Activated CD4-positive, alpha-beta T cell treated with anti-CD3 and anti-CD28 coated beads for 36 hours (primary cell): ENCODE measurements at regions of chr6 and their contacts with region 1.

Region 1: DNA sequence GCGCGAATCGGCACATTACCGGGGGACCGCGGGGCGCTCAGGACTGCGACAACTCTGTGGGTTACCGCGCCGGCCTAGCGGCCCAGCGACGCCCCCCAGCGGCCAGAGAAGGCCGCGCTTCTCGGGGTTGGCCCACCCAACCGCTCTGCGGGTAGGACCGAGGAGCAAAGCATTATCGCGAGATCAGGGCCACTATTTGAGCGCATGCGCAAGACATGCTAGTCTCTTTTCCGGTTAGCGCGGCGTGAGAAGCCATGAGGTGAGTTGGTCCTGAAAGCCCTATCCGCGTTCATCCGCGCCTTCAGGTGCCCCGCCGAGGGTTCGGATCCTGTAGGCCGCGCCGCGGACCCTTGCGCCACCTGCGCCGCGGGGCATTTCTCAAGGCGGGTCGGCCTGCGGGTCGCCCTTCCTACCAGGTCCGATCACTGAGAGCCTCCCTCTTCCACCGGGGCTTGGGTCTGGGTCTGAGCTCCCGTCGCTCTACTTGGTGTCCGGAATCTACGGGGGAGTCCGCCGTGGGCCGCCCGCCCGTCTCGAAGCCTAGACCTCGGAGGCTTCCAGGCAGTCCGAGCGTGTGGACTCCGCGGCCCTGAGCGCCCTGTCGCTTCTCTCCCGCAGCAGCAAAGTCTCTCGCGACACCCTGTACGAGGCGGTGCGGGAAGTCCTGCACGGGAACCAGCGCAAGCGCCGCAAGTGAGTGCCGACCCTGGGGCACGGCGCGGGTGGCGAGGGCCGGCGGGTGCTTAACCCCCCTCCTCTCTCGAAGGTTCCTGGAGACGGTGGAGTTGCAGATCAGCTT is at the start of gene RPL10A:
- DNase-seq: peak; percentile 97
- ATAC-seq: peak; percentile 87
- H3K4me3 Mint-ChIP-seq: peak within 1 kb of the TSS; percentile 93
- H3K27ac Mint-ChIP-seq: peak within 1 kb of the TSS; percentile 98
- H3K4me1 Mint-ChIP-seq: peaks cover 43% of the 10 kb centered on the region
- H3K27me3 Mint-ChIP-seq: no peaks in the 10 kb centered on the region
- total RNA-seq, gene RPL10A: 1,952 to 2,334 TPM

Region 2: DNA sequence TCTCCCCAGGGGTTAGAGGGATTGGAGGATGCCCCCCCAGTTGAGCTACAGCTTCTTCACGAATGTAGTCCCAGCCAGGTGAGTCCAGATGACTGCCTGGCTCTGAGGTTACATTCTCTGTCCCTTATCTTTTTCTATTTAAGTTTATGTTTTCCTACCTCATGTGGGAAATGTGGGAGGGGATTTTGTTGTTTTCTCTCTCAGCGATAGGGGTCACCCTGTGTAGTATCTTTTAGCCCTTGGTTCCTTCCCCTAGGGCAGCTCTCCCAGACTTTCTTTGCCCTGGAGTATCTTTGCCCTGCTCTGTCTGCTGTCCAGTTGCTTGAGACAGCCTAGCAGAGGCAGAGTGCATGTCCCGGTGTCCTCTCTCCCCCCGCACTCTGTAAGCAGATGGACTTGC is 10.5 kb before region 1 on chr6:
- CTCF ChIA-PET with region 1: interaction called, 38 read pairs
- POLR2A ChIA-PET with region 1: interaction called, 7 read pairs
- intact Hi-C with region 1: no loop called
- DNase-seq: no peak
- ATAC-seq: no peak
- H3K4me3 Mint-ChIP-seq: no peak overlapping the region
- H3K27ac Mint-ChIP-seq: no peak overlapping the region
- H3K4me1 Mint-ChIP-seq: peaks cover 16% of the 10 kb centered on the region
- H3K27me3 Mint-ChIP-seq: no peaks in the 10 kb centered on the region

Region 3: DNA sequence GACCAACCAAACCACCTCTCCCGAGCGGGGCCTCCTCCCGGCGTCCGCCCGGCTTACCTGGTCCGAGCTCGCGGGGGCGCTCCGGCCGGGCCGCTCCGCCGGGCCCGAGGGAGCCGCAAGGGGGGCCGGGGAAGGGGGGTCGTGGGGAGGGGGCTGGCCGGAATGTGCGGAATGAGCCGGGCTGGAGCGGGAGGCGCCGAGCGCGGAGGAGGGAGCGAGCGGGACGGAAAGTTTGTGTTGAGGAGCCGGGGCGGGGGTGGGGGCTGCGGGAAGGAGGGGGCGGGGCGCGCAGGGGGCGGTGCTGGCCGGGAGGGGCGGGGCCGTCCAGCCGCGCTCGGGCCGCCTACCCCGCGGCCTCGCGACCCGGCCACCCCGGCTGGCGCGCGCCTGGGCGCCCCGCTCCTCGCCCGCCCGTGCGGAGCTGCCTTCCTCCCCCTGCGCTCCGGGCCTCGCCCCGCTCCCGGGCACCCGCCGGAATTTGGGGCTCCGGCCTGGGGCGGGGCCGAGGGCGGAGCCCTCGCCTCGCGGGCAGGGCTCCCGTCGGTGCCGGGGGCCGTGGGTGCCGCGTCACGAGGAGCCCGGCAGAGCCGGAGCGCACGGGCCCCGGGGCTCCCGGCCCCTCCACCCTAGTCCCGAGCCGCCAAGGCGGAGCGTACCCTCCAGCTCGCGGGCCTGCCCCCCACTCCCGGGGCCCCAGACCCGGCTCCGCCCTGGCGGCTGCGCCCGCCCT is 28.6 kb after region 1 on chr6 and contains the start of gene TEAD3:
- CTCF ChIA-PET with region 1: interaction called, 3 read pairs
- POLR2A ChIA-PET with region 1: interaction called, 11 read pairs
- intact Hi-C with region 1: loop called in 1 of 2 experiments (anchors 1 kb)
- DNase-seq: peak; percentile 70
- ATAC-seq: peak; percentile 65
- H3K4me3 Mint-ChIP-seq: peak within 1 kb of the TSS; percentile 69
- H3K27ac Mint-ChIP-seq: peak within 1 kb of the TSS; percentile 28
- H3K4me1 Mint-ChIP-seq: peaks cover 4% of the 10 kb centered on the region
- H3K27me3 Mint-ChIP-seq: peaks cover 7% of the 10 kb centered on the region
- total RNA-seq, gene TEAD3: 1.4 to 1.5 TPM

Region 4: DNA sequence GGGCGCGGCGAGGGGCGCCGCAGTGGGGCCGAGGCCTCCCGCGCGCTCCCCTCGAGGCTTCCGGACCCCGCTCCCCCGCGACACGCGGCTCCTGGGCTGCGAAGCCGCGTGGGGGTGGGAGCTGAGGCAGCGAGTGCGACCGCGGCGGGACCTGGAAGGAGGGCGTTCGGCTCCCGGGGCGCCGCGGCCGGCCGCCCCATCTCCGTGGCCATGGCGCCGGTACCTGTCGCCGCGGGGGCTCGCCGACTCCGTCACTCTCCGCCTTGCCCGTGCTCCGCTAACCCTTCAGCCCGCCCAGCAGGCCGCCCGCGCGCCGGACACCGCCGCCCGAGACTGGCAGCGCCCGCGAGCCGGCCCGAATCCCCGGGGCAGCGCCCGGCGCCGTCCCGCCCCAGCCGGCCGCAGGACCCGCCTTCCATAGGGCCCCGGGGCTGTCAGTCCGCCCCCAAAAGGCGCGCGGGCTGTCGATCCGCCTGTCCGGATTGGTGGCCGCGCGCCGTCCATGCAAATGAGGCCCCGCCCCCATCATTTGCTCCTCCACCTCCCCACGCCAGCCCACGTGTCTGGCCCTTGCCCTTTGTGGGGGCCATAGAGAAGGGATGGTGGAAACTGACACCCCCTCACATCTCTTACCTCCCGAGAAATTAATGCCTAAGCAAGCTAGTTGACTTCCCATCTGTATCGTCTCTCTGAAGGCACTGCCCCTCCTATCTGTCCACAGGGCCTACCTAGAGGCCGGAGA is 220.4 kb after region 1 on chr6 and contains the start of gene FKBP5:
- CTCF ChIA-PET with region 1: no interaction called
- POLR2A ChIA-PET with region 1: no interaction called
- intact Hi-C with region 1: loop called in 1 of 2 experiments (anchors 5 kb)
- DNase-seq: peak; percentile 94
- ATAC-seq: peak; percentile 95
- H3K4me3 Mint-ChIP-seq: peak within 1 kb of the TSS; percentile 93
- H3K27ac Mint-ChIP-seq: peak within 1 kb of the TSS; percentile 93
- H3K4me1 Mint-ChIP-seq: peaks cover 8% of the 10 kb centered on the region
- H3K27me3 Mint-ChIP-seq: no peaks in the 10 kb centered on the region
- total RNA-seq, gene FKBP5: 140 to 141 TPM